ENCODE measurements at regions of chr2 and their contacts with region 1.

Region 1: GRCh38 chr2:233251306-233252116 is at the start of gene ATG16L1:
- DNase-seq: peak; percentile 93 to 98 (median 95)
- H3K4me3 ChIP-seq: peak within 1 kb of the TSS; percentile 91
- H3K27ac ChIP-seq: peak within 1 kb of the TSS in 1 of 2 donors; percentile 30
- H3K4me1 ChIP-seq: peaks cover 6% of the 10 kb centered on the region
- H3K27me3 ChIP-seq: no peaks in the 10 kb centered on the region
- CTCF ChIP-seq: peak; percentile 92 to 97 (median 97)
- EP300 ChIP-seq: peak; percentile 46
- POLR2A ChIP-seq: peak; percentile 46
- total RNA-seq, gene ATG16L1: 16.3 to 32.3 (median 21.4) TPM

Region 2: DNA sequence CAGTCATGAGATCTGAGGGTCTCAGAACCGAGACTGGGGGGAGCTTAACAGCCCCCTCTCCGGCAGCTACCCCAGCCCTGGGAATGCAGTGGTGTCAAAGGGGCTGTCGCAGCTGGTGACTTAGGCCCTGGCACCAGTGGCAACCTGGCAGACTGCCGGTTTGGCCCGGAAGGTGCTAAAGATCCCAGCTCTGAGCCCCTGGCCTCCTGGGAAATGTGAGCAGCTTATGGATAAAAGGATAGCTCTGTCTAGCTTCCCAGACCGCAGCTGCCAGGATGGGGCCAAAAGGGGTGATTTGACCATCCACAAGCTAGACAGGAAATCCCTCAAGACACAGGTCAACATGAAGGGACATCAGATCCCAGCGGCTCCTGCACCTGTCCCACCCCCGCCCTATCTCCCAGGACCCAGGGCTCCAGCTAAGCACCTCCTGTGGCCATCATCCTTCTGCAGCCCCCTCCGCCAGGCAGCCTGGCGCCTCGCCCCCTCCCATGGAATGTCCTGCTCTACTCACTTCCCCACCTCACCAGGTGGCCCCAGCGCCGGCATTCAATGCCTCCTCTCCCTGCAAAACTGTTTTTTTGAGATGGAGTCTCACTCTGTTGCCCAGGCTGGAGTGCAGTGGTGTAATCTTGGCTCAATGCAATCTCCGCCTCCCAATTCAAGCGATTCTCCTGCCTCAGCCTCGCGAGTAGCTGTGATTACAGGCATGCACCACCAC is 651.3 kb before region 1 on chr2:
- intact Hi-C with region 1: loop called in 1 of 4 experiments (anchors 10 kb)
- DNase-seq: no peak
- H3K4me3 ChIP-seq: no peak overlapping the region
- H3K27ac ChIP-seq: no peak overlapping the region
- H3K4me1 ChIP-seq: no peaks in the 10 kb centered on the region
- H3K27me3 ChIP-seq: no peaks in the 10 kb centered on the region
- CTCF ChIP-seq: no peak
- EP300 ChIP-seq: no peak
- POLR2A ChIP-seq: no peak

Region 3: GRCh38 chr2:232611551-232612218 is 639.8 kb before region 1 on chr2:
- intact Hi-C with region 1: loop called in 2 of 4 experiments (anchors 5 to 10 kb)
- DNase-seq: peak; percentile 40 to 77 (median 69)
- H3K4me3 ChIP-seq: no peak overlapping the region
- H3K27ac ChIP-seq: no peak overlapping the region
- H3K4me1 ChIP-seq: peaks cover 5% of the 10 kb centered on the region
- H3K27me3 ChIP-seq: no peaks in the 10 kb centered on the region
- CTCF ChIP-seq: peak; percentile 35 to 67 (median 55)
- EP300 ChIP-seq: no peak
- POLR2A ChIP-seq: no peak

Region 4: DNA sequence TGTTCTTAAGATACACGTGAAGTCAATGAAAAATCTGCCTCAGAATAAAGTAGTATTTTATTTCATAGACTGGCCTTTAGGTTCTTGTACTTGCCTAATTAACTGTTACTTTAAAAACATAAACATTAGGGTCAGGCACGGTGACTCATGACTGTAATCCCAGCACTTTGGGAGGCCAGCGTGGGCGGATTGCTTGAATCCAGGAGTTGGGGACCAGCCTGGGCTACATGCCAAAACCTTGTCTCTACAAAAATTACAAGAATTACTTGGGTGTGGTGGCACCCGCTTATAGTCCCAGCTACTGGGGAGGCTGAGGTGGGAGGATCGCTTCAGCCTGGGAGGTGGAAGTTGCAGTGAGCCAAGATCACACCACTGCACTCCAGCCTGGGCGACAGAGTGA is 397.4 kb before region 1 on chr2:
- intact Hi-C with region 1: loop called in 1 of 4 experiments (anchors 5 kb)
- DNase-seq: peak in 1 of 5 donors; percentile 29
- H3K4me3 ChIP-seq: no peak overlapping the region
- H3K27ac ChIP-seq: no peak overlapping the region
- H3K4me1 ChIP-seq: no peaks in the 10 kb centered on the region
- H3K27me3 ChIP-seq: no peaks in the 10 kb centered on the region
- CTCF ChIP-seq: no peak
- EP300 ChIP-seq: no peak
- POLR2A ChIP-seq: no peak